Mammary epithelial cell (primary cell): ENCODE measurements at regions of chr17 and their contacts with region 1.

Region 1: DNA sequence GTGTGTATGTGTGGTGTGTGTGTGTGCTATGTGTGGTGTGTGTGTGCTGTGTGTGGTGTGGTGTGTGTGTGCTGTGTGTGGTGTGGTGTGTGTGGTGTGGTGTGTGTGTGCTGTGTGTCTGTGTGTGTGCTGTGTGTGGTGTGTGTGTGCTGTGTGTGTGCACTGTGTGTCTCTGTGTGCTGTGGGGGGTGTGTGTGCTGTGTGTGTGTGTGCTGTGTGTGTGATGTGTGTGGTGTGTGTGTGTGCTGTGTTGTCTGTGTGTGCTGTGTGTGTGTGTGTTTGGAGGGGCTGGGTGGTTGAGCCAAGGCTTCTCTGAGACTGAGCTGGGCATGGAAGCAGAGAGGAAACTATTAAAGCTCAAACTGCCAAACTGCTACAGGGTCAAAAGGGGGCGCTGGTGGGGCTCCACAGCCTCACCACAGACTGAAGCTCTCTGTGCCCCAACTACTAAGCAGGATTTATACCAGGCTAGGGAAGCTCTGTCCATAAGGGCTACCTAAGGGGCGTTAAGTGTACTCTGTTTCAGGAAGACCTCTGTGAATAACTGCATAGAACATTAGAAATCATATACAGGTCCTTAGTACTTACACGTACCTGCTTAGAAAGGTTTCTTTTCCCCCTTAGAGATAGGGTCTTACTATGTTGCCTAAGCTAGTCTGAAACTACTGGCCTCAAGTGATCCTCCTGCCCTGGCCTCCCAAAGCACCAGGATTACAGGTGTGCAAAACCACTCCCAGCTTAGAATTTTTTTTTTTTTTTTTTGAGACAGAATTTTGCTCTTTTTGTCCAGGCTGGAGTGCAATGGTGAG is 27.8 kb upstream of the GHDC start:
- DNase-seq: peak; percentile 17
- H3K4me3 ChIP-seq: no peak overlapping the region
- H3K27ac ChIP-seq: no peak overlapping the region
- H3K4me1 ChIP-seq: no peaks in the 10 kb centered on the region
- H3K27me3 ChIP-seq: no peaks in the 10 kb centered on the region
- CTCF ChIP-seq: peak; percentile 55 to 64

Region 2: GRCh38 chr17:42183741-42184711 is 38.1 kb before region 1 on chr17:
- CTCF ChIA-PET with region 1: no interaction called
- dilution Hi-C with region 1: loop called (anchors 5 kb)
- in situ Hi-C with region 1: no loop called
- intact Hi-C with region 1: no loop called
- DNase-seq: peak; percentile 12
- H3K4me3 ChIP-seq: peak overlapping the region in 2 of 3 experiments; percentile 35 to 39
- H3K27ac ChIP-seq: no peak overlapping the region
- H3K4me1 ChIP-seq: peaks cover 21% of the 10 kb centered on the region
- H3K27me3 ChIP-seq: peaks cover 12% of the 10 kb centered on the region
- CTCF ChIP-seq: peak; percentile 39 to 47

Region 3: DNA sequence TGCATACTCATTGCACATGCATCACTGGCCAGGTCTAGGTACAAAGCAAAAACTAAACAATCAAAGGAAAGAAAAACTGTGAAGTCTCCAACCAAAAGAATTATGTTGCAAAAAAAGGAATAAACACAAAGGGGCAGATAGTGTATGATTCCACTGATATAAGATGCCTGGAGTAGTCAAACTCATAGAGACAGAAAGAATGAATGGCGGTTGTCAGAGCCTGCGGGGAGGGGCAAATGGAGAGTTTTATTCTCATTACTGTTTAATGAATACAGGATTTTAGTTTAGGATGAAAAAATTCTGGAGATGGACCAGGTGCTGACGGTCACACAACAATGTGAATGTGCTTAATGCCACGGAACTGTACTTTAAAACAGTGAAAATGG is 33.3 kb after region 1 on chr17:
- CTCF ChIA-PET with region 1: no interaction called
- dilution Hi-C with region 1: loop called (anchors 5 kb)
- in situ Hi-C with region 1: no loop called
- intact Hi-C with region 1: no loop called
- DNase-seq: no peak
- H3K4me3 ChIP-seq: no peak overlapping the region
- H3K27ac ChIP-seq: no peak overlapping the region
- H3K4me1 ChIP-seq: no peaks in the 10 kb centered on the region
- H3K27me3 ChIP-seq: no peaks in the 10 kb centered on the region
- CTCF ChIP-seq: no peak

Region 4: DNA sequence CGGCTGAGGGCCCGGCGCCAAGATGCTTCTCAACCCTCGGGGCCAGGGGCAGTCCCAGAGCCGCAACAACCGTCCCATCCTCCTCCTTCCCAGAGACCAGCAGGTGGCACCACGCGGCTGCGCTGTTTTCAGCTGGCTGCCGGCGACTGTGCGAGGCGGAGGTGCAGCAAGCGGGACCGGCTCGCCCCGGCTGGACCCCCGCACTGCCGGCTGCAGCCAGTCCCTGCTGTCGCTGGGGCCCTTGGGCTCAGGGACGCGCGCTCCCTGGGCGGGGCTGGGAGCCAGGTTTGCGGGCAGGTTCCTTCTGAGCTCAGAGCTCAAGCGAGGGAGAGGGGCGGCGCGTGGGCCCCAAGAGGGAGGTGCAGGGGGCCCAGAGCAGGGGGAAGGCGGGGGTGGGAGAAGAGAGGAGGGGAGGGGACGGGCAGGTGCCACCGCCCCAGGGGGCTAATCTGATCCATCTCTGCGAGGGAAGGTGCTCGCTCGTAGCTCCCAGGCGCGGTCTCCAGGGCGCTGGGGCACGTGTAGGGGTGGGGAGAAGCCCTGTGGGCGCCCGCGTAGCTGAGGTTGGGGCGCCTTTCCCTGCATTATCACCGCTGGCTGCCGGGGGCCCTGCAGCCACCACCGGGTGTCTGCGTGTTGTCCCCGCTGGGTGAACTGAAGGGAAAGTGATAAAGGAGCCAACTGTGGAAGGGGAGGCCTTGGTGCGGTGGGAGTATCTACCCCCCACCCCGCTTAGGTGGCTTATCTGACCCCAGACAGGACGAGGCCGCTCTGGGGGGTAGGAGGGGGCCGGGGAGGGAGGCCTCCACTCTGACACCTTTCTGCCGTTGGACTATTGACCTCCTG is 90.4 kb after region 1 on chr17:
- CTCF ChIA-PET with region 1: no interaction called
- dilution Hi-C with region 1: no loop called
- in situ Hi-C with region 1: no loop called
- intact Hi-C with region 1: loop called (anchors 2 kb)
- DNase-seq: peak; percentile 48
- H3K4me3 ChIP-seq: no peak overlapping the region
- H3K27ac ChIP-seq: no peak overlapping the region
- H3K4me1 ChIP-seq: peaks cover 13% of the 10 kb centered on the region
- H3K27me3 ChIP-seq: no peaks in the 10 kb centered on the region
- CTCF ChIP-seq: peak; percentile 40 to 78

Region 5: DNA sequence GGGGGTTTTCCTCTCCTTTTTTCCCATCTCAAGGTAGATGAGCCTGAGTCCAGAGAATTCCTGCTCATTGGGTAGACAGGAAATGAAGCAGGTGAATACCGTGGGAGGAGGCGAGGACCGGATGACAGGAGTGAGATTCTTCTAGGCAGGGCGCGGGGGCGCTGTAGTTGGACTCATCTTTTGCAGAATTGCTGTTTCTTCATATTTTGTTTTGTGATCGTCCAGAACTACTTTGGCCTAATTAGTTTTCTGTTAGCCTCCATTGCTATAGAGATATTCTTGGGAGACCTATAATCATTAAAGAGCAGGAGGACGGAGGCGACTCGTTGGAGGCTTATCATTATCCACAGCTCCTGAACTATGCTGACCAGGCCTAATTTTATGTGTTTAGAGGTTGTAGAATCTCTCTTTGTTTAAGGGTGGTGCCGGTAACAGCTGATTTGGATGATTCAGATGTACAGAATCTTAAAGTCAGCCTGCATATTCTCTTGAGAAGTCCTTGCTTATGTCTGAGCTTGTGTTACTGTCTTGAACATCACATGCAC is 237.2 kb after region 1 on chr17:
- CTCF ChIA-PET with region 1: no interaction called
- dilution Hi-C with region 1: no loop called
- in situ Hi-C with region 1: no loop called
- intact Hi-C with region 1: no loop called
- DNase-seq: peak; percentile 63
- H3K4me3 ChIP-seq: peak overlapping the region; percentile 73 to 97 (median 77)
- H3K27ac ChIP-seq: peak overlapping the region; percentile 68
- H3K4me1 ChIP-seq: peaks cover 41% of the 10 kb centered on the region
- H3K27me3 ChIP-seq: no peaks in the 10 kb centered on the region
- CTCF ChIP-seq: peak in 1 of 2 donors; percentile 51